Activated CD4-positive, alpha-beta T cell treated with anti-CD3 and anti-CD28 coated beads for 36 hours (primary cell): ENCODE measurements at regions of chr12 and their contacts with region 1.

Region 1: DNA sequence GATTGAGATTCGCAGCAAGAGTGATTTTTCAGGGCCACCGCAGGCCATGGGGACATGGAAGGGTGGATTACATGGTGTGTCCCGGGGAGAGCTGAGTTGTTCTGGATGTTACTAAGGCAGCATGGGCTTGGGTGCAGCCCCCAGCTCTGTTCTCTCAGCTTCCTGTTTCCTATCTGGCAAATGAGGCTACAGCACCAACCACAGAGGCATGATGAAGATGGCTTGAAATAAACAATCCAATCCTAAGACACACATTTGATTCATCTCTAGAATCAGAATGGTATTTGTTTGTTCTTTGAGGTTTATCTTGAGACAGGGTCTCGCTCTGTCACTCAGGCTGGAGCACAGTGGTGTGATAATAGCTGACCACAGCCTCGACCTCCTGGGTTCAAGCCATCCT is 21.6 kb downstream of the GLTP start:
- DNase-seq: no peak
- ATAC-seq: no peak
- H3K4me3 Mint-ChIP-seq: no peak overlapping the region
- H3K27ac Mint-ChIP-seq: no peak overlapping the region
- H3K4me1 Mint-ChIP-seq: peaks cover 3% of the 10 kb centered on the region
- H3K27me3 Mint-ChIP-seq: no peaks in the 10 kb centered on the region

Region 2: GRCh38 chr12:109744986-109745942 is 113.5 kb before region 1 on chr12:
- CTCF ChIA-PET with region 1: no interaction called
- POLR2A ChIA-PET with region 1: no interaction called
- intact Hi-C with region 1: no loop called
- DNase-seq: peak; percentile 1
- ATAC-seq: no peak
- H3K4me3 Mint-ChIP-seq: no peak overlapping the region
- H3K27ac Mint-ChIP-seq: no peak overlapping the region
- H3K4me1 Mint-ChIP-seq: no peaks in the 10 kb centered on the region
- H3K27me3 Mint-ChIP-seq: peaks cover 3% of the 10 kb centered on the region

Region 3: GRCh38 chr12:109927622-109928021 is 68.9 kb after region 1 on chr12:
- CTCF ChIA-PET with region 1: interaction called, 14 read pairs
- POLR2A ChIA-PET with region 1: no interaction called
- intact Hi-C with region 1: loop called (anchors 1 kb)
- DNase-seq: peak; percentile 67
- ATAC-seq: peak; percentile 88
- H3K4me3 Mint-ChIP-seq: no peak overlapping the region
- H3K27ac Mint-ChIP-seq: peak overlapping the region; percentile 9
- H3K4me1 Mint-ChIP-seq: no peaks in the 10 kb centered on the region
- H3K27me3 Mint-ChIP-seq: no peaks in the 10 kb centered on the region